PC-3 (cell line): ENCODE measurements at regions of chr3 and their contacts with region 1.

Region 1: GRCh38 chr3:101928890-101929289 is 79.6 kb downstream of the NFKBIZ start:
- DNase-seq: peak; percentile 95
- ATAC-seq: peak; percentile 41
- H3K4me3 ChIP-seq: no peak overlapping the region
- H3K27ac ChIP-seq: peak overlapping the region; percentile 91
- H3K4me1 ChIP-seq: peaks cover 38% of the 10 kb centered on the region
- H3K27me3 ChIP-seq: no peaks in the 10 kb centered on the region
- CTCF ChIP-seq: no peak

Region 2: DNA sequence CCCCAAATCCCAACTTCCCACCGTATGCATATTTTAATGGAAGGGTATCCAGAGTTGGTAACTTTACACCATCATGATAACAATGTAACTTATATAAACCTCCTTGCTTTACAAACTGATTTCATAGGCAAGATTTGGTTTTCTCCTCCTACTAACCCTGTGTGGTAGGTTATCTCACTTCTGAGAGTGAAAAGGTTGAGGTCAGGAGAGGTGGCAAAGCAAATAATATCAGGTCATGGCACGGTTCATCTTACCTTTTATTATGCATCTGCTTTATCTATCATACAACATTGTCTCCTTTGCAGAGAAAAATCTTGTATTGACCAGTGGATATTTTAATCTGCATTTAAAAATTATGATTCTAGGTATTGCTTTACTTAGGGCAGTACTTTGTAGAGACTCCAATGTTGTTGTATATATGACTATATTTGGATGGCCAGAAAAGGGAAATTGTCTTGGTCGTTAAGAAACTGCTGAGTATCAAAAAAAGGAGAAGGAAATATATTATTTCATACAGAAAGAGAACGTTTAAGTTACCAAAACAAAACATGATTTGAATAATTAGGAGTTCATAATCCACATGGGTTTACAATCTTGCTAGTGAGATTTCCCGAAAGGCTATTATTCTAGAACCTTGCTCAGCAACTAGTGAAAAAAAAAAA is 49.1 kb before region 1 on chr3:
- CTCF ChIA-PET with region 1: no interaction called
- POLR2A ChIA-PET with region 1: no interaction called
- intact Hi-C with region 1: loop called (anchors 2 kb)
- DNase-seq: no peak
- ATAC-seq: no peak
- H3K4me3 ChIP-seq: no peak overlapping the region
- H3K27ac ChIP-seq: peak overlapping the region; percentile 47; the same call in 1 of the 2 replicates
- H3K4me1 ChIP-seq: peaks cover 26% of the 10 kb centered on the region
- H3K27me3 ChIP-seq: no peaks in the 10 kb centered on the region
- CTCF ChIP-seq: no peak

Region 3: DNA sequence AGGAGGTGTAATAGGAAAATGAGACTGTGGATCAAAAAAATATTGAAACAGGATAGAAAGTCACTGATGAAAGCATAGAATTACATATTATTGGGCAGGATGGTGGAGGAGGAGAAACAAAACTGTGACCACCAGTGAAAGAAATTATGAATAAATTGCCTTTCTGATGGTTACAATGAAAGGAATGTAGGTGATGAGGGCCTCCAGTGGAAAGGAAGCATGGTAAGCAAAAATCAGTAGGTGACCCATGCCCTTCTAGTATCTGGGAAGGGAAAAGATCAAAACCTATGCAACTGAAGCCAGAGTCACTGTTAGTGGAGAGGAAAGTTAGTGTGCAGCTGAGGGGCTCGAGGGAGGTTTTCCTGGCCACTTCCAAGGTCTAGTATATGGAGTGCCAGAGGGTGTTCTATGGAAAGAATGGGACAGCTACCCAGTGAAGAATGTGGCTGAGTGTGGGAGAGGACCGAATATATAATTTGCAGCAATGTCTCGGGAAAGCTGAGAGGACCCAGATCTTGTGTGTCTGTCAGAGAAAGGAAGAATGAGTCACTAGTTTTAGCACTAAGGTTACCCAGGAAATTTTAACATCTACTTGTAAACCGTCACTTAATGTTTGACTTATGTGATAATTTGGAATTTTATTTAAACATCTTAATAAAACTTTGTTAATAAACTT is 66.6 kb after region 1 on chr3:
- CTCF ChIA-PET with region 1: no interaction called
- POLR2A ChIA-PET with region 1: no interaction called
- intact Hi-C with region 1: loop called (anchors 2 kb)
- DNase-seq: peak; percentile 63
- ATAC-seq: peak; percentile 87
- H3K4me3 ChIP-seq: no peak overlapping the region
- H3K27ac ChIP-seq: peak overlapping the region; percentile 61
- H3K4me1 ChIP-seq: peaks cover 27% of the 10 kb centered on the region
- H3K27me3 ChIP-seq: no peaks in the 10 kb centered on the region
- CTCF ChIP-seq: no peak

Region 4: GRCh38 chr3:102053375-102053989 is 124.6 kb after region 1 on chr3:
- CTCF ChIA-PET with region 1: no interaction called
- POLR2A ChIA-PET with region 1: no interaction called
- intact Hi-C with region 1: loop called (anchors 5 kb)
- DNase-seq: peak; percentile 80
- ATAC-seq: peak; percentile 96
- H3K4me3 ChIP-seq: no peak overlapping the region
- H3K27ac ChIP-seq: peak overlapping the region; percentile 15
- H3K4me1 ChIP-seq: peaks cover 17% of the 10 kb centered on the region
- H3K27me3 ChIP-seq: no peaks in the 10 kb centered on the region
- CTCF ChIP-seq: no peak

Region 5: DNA sequence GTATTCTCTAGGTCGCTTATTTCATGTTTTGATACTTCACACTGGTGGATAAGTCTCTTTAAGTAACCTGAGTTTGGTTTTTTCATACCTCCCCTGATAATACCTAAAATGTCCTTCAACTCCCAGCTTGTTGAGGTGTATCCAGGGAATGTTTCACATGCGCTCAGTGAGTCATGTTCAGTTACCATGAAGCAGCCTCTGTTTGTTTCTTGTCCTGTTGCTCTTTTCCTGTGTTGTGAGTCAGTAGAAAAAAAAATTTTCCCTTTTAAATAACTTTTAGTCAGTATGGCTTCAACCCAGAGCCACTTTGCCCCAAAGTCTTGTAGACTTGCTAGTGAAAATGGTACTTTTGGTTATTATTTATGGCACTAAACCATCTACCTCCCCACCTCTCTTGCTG is 227.5 kb after region 1 on chr3:
- CTCF ChIA-PET with region 1: no interaction called
- POLR2A ChIA-PET with region 1: no interaction called
- intact Hi-C with region 1: loop called (anchors 1 kb)
- DNase-seq: peak; percentile 94
- ATAC-seq: peak; percentile 90
- H3K4me3 ChIP-seq: no peak overlapping the region
- H3K27ac ChIP-seq: peak overlapping the region; percentile 96
- H3K4me1 ChIP-seq: peaks cover 34% of the 10 kb centered on the region
- H3K27me3 ChIP-seq: no peaks in the 10 kb centered on the region
- CTCF ChIP-seq: no peak